ENCODE measurements at regions of chr9 and their contacts with region 1.

Region 1: DNA sequence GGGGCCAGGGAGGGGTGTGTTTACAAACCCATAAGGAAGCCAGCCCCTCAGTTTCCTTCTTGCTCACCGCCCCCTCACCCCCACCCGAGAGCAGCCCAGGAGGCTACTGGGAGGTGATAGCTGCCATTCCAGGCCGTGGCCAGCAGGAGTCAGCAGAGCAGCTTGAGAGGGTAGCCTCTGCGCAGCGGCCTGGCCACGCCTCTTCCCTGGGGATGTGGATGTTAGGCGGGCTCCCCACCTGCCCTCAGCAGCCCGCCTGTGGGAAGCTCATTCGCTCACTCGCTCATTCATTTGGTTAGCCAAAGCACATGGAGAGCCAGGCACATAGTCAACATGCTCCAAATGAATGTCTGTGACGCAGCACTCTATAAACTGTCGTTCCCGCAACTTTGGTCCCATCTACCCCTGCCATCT is 6.1 kb upstream of the DPM2 start:
- DNase-seq: peak; percentile 71
- H3K4me3 ChIP-seq: no peak overlapping the region
- H3K27ac ChIP-seq: no peak overlapping the region
- H3K4me1 ChIP-seq: no peaks in the 10 kb centered on the region
- H3K27me3 ChIP-seq: no peaks in the 10 kb centered on the region
- CTCF ChIP-seq: peak; percentile 90 to 99
- POLR2A ChIP-seq: no peak

Region 2: GRCh38 chr9:127910613-127911205 is 33.0 kb before region 1 on chr9:
- CTCF ChIA-PET with region 1: no interaction called
- POLR2A ChIA-PET with region 1: no interaction called
- dilution Hi-C with region 1: no loop called
- intact Hi-C with region 1: no loop called
- DNase-seq: peak; percentile 50
- H3K4me3 ChIP-seq: no peak overlapping the region
- H3K27ac ChIP-seq: no peak overlapping the region
- H3K4me1 ChIP-seq: peaks cover 21% of the 10 kb centered on the region
- H3K27me3 ChIP-seq: no peaks in the 10 kb centered on the region
- CTCF ChIP-seq: peak in 1 of 2 donors; percentile 19
- POLR2A ChIP-seq: no peak

Region 3: GRCh38 chr9:127955294-127956035 is 11.7 kb after region 1 on chr9:
- CTCF ChIA-PET with region 1: interaction called, 37 read pairs
- POLR2A ChIA-PET with region 1: interaction called, 3 read pairs
- dilution Hi-C with region 1: no loop called
- intact Hi-C with region 1: no loop called
- DNase-seq: peak; percentile 21
- H3K4me3 ChIP-seq: no peak overlapping the region
- H3K27ac ChIP-seq: no peak overlapping the region
- H3K4me1 ChIP-seq: peaks cover 6% of the 10 kb centered on the region
- H3K27me3 ChIP-seq: no peaks in the 10 kb centered on the region
- CTCF ChIP-seq: no peak
- POLR2A ChIP-seq: no peak

Region 4: GRCh38 chr9:128001779-128002298 is 58.1 kb after region 1 on chr9:
- CTCF ChIA-PET with region 1: interaction called, 16 read pairs
- POLR2A ChIA-PET with region 1: no interaction called
- dilution Hi-C with region 1: no loop called
- intact Hi-C with region 1: loop called (anchors 2 kb)
- DNase-seq: peak; percentile 73
- H3K4me3 ChIP-seq: no peak overlapping the region
- H3K27ac ChIP-seq: peak overlapping the region; percentile 67
- H3K4me1 ChIP-seq: peaks cover 28% of the 10 kb centered on the region
- H3K27me3 ChIP-seq: no peaks in the 10 kb centered on the region
- CTCF ChIP-seq: no peak
- POLR2A ChIP-seq: no peak

Region 5: GRCh38 chr9:128034821-128035764 is 91.4 kb after region 1 on chr9:
- CTCF ChIA-PET with region 1: interaction called, 203 read pairs
- POLR2A ChIA-PET with region 1: no interaction called
- dilution Hi-C with region 1: no loop called
- intact Hi-C with region 1: loop called (anchors 1 kb)
- DNase-seq: peak; percentile 84
- H3K4me3 ChIP-seq: no peak overlapping the region
- H3K27ac ChIP-seq: no peak overlapping the region
- H3K4me1 ChIP-seq: no peaks in the 10 kb centered on the region
- H3K27me3 ChIP-seq: no peaks in the 10 kb centered on the region
- CTCF ChIP-seq: peak; percentile 77 to 78
- POLR2A ChIP-seq: no peak

Region 6: DNA sequence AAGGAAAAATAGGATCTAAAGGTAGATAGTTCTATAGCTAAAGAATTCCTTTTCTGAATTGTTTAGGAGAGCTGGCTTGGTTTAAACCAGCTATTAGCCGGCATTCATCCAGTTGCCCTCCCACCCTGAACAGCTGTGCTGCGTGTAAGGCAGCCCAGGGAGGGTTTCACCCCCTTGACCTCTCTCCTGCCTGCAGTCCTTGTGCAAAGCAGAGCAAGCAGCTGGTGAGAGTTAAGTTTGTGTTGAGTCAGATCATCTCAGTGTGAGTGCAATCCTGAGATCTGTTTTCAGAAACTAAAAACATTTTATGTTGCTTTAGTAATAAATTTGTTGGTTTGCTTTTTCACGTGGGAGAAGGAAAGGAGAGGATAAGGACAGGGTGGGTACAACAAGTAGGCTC is 137.3 kb after region 1 on chr9:
- CTCF ChIA-PET with region 1: interaction called, 11 read pairs
- POLR2A ChIA-PET with region 1: no interaction called
- dilution Hi-C with region 1: no loop called
- intact Hi-C with region 1: loop called (anchors 1 kb)
- DNase-seq: peak; percentile 41
- H3K4me3 ChIP-seq: no peak overlapping the region
- H3K27ac ChIP-seq: no peak overlapping the region
- H3K4me1 ChIP-seq: peaks cover 18% of the 10 kb centered on the region
- H3K27me3 ChIP-seq: no peaks in the 10 kb centered on the region
- CTCF ChIP-seq: no peak
- POLR2A ChIP-seq: no peak

Measured in endothelial cell of umbilical vein (primary cell).